ENCODE measurements at regions of chr1 and their contacts with region 1.

Region 1: GRCh38 chr1:115807723-115808122 is 33.2 kb downstream of the NHLH2 start:
- DNase-seq: peak; percentile 49 to 81 (median 70)
- H3K4me3 ChIP-seq: no peak overlapping the region
- H3K27ac ChIP-seq: no peak overlapping the region
- H3K4me1 ChIP-seq: no peaks in the 10 kb centered on the region
- H3K27me3 ChIP-seq: no peaks in the 10 kb centered on the region
- CTCF ChIP-seq: peak; percentile 62 to 71 (median 67)
- POLR2A ChIP-seq: no peak

Region 2: DNA sequence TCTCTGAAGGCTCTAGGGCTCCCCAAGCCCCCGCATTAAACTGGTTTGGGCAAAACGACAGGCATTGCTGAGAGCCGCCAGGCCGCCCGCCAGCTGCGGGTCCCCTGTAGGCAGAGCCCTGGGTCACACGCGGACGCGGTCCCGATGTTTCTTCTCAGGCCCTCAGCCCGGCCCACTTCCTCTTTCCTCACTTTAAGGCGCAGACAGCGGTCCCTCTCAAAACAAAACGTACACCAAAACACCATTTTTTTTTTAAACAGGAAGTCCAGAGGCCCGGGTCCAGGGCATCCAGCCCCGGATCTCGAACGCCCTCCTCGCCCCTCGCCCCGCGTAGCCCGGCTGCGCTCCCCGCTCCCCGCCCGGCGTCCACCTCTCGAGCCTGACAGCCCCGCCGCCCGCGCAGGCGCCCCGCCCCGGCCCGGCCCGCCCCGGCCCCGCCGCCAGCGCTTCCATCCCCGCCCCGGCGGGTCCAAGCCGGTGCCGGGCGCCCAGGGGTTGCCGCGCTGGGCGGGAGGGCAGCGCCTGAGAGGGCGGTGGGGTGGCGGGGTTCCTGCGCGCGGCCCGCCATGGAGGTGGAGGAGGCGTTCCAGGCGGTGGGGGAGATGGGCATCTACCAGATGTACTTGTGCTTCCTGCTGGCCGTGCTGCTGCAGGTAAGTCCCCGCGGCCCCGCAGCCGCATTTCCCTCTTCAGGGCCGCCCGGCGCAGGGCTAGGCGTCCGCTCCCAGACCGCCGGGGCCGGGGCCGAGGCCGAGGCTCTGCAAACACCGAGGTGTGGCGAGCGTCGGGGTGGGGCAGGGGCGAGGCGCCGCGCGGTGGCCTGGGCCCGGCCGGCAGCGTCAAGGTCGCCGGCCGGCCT is 168.6 kb after region 1 on chr1 and contains the start of gene SLC22A15:
- intact Hi-C with region 1: loop called (anchors 5 kb)
- DNase-seq: peak; percentile 51 to 79 (median 64)
- H3K4me3 ChIP-seq: peak within 1 kb of the TSS; percentile 29 to 75 (median 40)
- H3K27ac ChIP-seq: peak within 1 kb of the TSS in 3 of 5 donors; percentile 43 to 67 (median 60)
- H3K4me1 ChIP-seq: no peaks in the 10 kb centered on the region
- H3K27me3 ChIP-seq: no peaks in the 10 kb centered on the region
- CTCF ChIP-seq: peak in 1 of 6 experiments; percentile 5
- POLR2A ChIP-seq: peak in 1 of 2 donors; percentile 16
- total RNA-seq, gene SLC22A15: 2.3 to 27.2 (median 5.9) TPM

Region 3: GRCh38 chr1:115980998-115981993 is 173.6 kb after region 1 on chr1:
- intact Hi-C with region 1: loop called (anchors 5 kb)
- DNase-seq: peak in 5 of 7 donors; percentile 13 to 34 (median 21)
- H3K4me3 ChIP-seq: no peak overlapping the region
- H3K27ac ChIP-seq: no peak overlapping the region
- H3K4me1 ChIP-seq: no peaks in the 10 kb centered on the region
- H3K27me3 ChIP-seq: no peaks in the 10 kb centered on the region
- CTCF ChIP-seq: peak; percentile 52 to 76 (median 64)
- POLR2A ChIP-seq: no peak